Activated CD4-positive, alpha-beta T cell treated with anti-CD3 and anti-CD28 coated beads for 36 hours (primary cell): ENCODE measurements at regions of chr5 and their contacts with region 1.

Region 1: DNA sequence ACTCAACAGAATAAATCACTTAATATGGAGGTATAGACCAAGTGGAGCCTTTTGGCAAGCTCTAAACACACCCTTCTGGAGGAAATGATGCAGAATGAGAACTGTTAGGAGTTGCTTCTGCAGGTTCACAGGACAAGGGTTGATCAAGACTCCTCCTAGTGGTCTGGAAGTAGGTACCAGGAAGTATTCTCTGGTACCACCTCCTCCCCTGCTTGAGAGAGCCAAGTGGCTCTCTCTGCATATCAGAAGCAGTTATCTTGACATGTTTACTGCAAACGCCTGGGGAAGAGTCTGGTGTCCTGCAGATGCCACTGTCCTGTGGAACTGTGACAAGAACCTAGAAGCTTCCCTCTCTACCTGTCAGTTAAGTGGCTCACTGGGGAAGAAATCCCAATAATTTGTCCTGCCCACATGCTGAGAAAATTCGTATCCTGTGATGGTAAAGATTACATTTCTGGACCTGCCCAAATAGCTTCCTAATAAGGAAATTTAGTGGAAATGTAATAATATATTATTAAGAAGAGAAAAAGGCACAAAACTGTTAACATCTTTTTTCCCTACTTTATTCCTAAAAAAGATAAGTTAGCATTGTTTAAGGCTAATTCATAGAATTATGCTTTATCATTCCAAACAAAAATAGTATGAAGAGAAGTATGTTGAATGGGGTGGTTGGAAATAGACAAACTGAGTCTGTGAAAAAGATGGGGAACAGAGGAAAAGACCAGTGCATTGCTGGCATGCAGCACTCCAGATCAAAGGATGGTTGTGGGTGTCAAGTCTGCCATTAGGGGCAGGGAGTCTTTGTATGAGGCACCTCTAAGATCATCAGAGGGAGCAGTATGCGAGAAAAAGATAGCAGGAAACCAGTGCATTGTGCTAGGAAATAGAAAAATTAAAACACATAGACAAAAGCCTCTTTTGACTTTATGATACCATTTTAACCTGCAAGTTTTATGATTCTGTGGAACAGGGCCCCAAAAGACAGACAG is 118.8 kb downstream of the CDC42SE2 start:
- DNase-seq: peak; percentile 57
- ATAC-seq: peak; percentile 67
- H3K4me3 Mint-ChIP-seq: peak overlapping the region; percentile 40
- H3K27ac Mint-ChIP-seq: peak overlapping the region; percentile 94
- H3K4me1 Mint-ChIP-seq: peaks cover 94% of the 10 kb centered on the region
- H3K27me3 Mint-ChIP-seq: no peaks in the 10 kb centered on the region

Region 2: GRCh38 chr5:131165119-131165727 is 217.5 kb before region 1 on chr5 and contains the start of gene HINT1:
- CTCF ChIA-PET with region 1: interaction called, 4 read pairs
- POLR2A ChIA-PET with region 1: interaction called, 9 read pairs
- intact Hi-C with region 1: loop called (anchors 1 to 2 kb)
- DNase-seq: peak; percentile 96
- ATAC-seq: peak; percentile 89
- H3K4me3 Mint-ChIP-seq: peak within 1 kb of the TSS; percentile 83
- H3K27ac Mint-ChIP-seq: peak within 1 kb of the TSS; percentile 99
- H3K4me1 Mint-ChIP-seq: peaks cover 51% of the 10 kb centered on the region
- H3K27me3 Mint-ChIP-seq: no peaks in the 10 kb centered on the region
- total RNA-seq, gene HINT1: 298 to 312 TPM

Region 3: DNA sequence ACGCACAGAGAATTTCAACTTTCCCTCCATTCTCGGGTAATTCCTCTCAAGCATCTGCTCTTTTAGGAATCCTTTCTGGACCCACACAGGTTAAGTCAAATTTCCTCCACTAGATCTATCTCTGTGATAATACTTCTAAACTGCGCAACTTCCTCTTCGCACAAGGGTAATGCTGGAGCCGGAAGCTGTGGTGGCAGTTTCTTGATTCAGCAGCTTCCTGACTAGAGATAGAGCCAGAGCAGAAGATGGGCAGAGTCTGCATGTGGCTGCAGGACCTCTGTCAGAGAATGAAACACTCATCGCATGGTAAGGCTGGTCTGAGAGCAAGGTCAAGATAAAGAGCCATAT is 129.9 kb before region 1 on chr5:
- CTCF ChIA-PET with region 1: interaction called, 7 read pairs
- POLR2A ChIA-PET with region 1: interaction called, 4 read pairs
- intact Hi-C with region 1: loop called in 1 of 2 experiments (anchors 1 kb)
- DNase-seq: peak; percentile 87
- ATAC-seq: peak; percentile 70
- H3K4me3 Mint-ChIP-seq: peak overlapping the region; percentile 84
- H3K27ac Mint-ChIP-seq: peak overlapping the region; percentile 98
- H3K4me1 Mint-ChIP-seq: peaks cover 69% of the 10 kb centered on the region
- H3K27me3 Mint-ChIP-seq: no peaks in the 10 kb centered on the region

Region 4: DNA sequence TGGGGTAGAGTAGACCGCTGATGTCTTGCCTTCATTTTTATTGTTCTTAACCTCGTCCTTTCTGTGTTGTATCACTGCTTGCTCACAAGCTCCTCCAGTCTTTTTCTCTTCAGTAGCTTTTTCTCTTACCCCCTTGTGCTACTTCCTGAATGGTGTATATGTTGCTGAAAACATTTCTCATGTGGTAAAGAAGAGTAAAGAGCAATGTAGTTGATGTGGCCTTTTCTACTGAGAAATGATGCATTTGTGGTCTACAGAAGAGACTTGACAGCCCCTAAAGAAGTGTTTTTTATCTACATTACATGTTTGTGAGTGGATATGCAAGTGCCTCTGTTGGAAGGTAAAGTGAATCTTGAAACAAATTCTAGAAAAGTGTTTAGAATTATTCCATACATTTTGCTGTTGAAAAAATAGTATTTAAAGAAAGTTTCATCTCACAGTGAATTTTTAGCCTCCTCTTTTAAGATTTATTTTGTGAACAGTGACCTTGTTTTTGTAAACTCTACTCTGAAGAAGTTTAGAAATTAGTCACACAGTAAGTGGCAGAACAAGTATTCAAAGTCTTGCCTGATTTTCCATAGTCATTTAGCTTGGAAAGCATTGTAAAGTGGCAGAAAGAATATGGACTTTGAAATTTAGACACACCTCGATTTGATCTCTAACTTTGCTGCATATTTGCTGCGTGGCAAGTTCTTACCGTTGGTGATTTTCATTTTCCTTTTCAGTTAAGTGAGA is 101.4 kb before region 1 on chr5:
- CTCF ChIA-PET with region 1: interaction called, 12 read pairs
- POLR2A ChIA-PET with region 1: interaction called, 4 read pairs
- intact Hi-C with region 1: loop called (anchors 1 to 2 kb)
- DNase-seq: no peak
- ATAC-seq: peak; percentile 78
- H3K4me3 Mint-ChIP-seq: peak overlapping the region; percentile 74
- H3K27ac Mint-ChIP-seq: peak overlapping the region; percentile 95
- H3K4me1 Mint-ChIP-seq: peaks cover 90% of the 10 kb centered on the region
- H3K27me3 Mint-ChIP-seq: no peaks in the 10 kb centered on the region

Region 5: DNA sequence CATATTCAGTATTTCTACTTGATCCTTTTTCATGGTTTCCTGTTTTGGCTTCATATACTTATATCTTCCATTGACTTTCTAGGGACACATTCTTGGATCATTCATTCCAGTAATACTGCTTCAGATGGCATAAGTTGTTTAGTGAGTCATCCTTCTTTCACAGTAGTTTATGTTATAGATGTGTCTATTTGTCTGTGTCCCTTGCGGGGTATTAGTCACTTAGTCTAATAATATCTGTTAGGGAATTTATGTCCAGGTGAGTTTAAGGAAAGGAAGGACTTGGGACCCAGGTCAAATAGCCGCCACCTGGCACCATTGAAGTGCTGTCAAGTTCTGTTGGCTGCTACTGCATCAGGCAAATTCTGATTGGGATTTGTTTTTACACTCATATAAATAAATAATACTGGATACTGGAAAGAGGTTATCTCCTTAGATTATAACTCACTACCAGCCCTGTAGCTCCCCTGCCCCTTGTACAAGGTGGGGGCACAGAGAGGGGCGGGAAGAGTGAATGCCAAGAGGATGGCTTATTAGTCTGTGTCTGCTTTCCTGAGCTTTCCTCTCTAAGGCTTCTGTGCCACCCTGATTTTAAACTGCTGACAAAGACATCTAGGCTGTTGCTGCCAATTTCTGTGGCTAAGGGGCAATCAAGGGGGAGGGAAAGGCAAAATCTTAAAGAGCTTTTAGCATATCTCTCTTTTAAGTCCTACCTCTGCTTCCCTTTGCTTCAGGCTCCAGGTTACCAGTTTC is 54.0 kb before region 1 on chr5:
- CTCF ChIA-PET with region 1: interaction called, 5 read pairs
- POLR2A ChIA-PET with region 1: interaction called, 4 read pairs
- intact Hi-C with region 1: loop called (anchors 2 to 5 kb)
- DNase-seq: no peak
- ATAC-seq: peak; percentile 78
- H3K4me3 Mint-ChIP-seq: no peak overlapping the region
- H3K27ac Mint-ChIP-seq: peak overlapping the region; percentile 87
- H3K4me1 Mint-ChIP-seq: peaks cover 62% of the 10 kb centered on the region
- H3K27me3 Mint-ChIP-seq: no peaks in the 10 kb centered on the region

Region 6: GRCh38 chr5:131364507-131365050 is 18.1 kb before region 1 on chr5:
- CTCF ChIA-PET with region 1: interaction called, 10 read pairs
- POLR2A ChIA-PET with region 1: interaction called, 4 read pairs
- intact Hi-C with region 1: loop called in 1 of 2 experiments (anchors 1 kb)
- DNase-seq: no peak
- ATAC-seq: peak; percentile 59
- H3K4me3 Mint-ChIP-seq: no peak overlapping the region
- H3K27ac Mint-ChIP-seq: peak overlapping the region; percentile 87
- H3K4me1 Mint-ChIP-seq: peaks cover 82% of the 10 kb centered on the region
- H3K27me3 Mint-ChIP-seq: no peaks in the 10 kb centered on the region

Region 7: DNA sequence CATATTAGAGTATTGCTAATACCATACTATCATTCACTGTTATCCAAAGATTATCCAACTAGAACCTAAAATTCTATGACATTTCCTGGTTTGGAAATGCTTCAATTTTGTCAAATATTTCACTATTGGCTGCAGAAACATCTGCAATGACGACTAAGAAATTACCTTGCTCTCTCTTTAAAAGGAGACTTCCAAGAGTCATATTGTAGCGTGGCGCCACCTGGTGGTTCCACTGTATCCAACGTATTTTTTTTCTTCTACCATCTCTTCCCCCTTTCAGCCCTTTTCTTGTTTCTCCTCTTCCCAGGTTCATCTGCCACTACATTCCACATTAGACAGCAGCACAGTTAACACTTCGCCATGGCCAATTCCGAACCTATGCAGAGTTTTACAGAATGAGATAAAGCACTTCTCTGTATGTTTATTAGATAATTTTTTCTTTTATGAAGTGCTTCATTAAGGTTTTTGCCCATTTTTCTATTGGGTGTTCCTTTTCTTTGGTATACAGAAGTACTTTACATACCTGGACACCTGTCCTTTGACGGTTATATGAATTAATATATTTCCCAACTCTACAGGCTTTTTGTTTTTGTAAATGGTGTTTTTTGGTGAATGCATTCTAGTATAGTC is 34.7 kb after region 1 on chr5:
- CTCF ChIA-PET with region 1: interaction called, 3 read pairs
- POLR2A ChIA-PET with region 1: no interaction called
- intact Hi-C with region 1: loop called in 1 of 2 experiments (anchors 5 kb)
- DNase-seq: peak; percentile 92
- ATAC-seq: no peak
- H3K4me3 Mint-ChIP-seq: no peak overlapping the region
- H3K27ac Mint-ChIP-seq: peak overlapping the region; percentile 40
- H3K4me1 Mint-ChIP-seq: peaks cover 43% of the 10 kb centered on the region
- H3K27me3 Mint-ChIP-seq: no peaks in the 10 kb centered on the region